Gastrocnemius medialis (tissue), 4 donors: ENCODE measurements at regions of chr9 and their contacts with region 1.

Region 1: GRCh38 chr9:124852829-124853531 is at the start of gene WDR38:
- DNase-seq: peak; percentile 88 to 94
- ATAC-seq: peak; percentile 86 to 88
- H3K4me3 ChIP-seq: peak within 1 kb of the TSS; percentile 35 to 59 (median 50)
- H3K27ac ChIP-seq: peak within 1 kb of the TSS; percentile 80 to 93 (median 90)
- H3K4me1 ChIP-seq: peaks cover 28 to 32% of the 10 kb centered on the region in 2 donors
- H3K27me3 ChIP-seq: no peaks in the 10 kb centered on the region
- CTCF ChIP-seq: peak; percentile 95 to 100 (median 100)
- POLR2A ChIP-seq: no peak
- total RNA-seq, gene WDR38: not detected

Region 2: DNA sequence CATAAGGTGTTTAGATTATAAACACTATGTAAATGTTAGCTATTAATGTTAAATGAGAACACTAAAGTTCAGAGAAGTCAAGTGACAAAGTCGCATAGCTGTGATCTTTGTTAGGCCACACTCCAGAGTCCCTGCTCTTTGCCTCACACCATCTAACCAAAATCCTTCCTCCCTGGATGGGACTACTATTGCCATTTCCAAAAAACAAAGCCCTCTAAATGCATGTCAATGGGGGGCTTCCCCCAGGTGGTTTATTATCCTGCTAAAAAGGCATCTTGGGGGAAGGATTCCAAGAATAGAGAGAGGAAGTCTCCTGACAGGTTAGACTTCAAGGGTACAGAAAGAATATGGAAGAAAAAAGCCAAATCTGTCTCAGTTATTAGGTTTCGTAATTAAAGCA is 92.3 kb before region 1 on chr9:
- in situ Hi-C with region 1: no loop called
- intact Hi-C with region 1: no loop called
- DNase-seq: no peak
- ATAC-seq: no peak
- H3K4me3 ChIP-seq: no peak overlapping the region
- H3K27ac ChIP-seq: no peak overlapping the region
- H3K4me1 ChIP-seq: no peaks in the 10 kb centered on the region
- H3K27me3 ChIP-seq: peaks cover 0 to 8% (median 4%) of the 10 kb centered on the region in 3 donors
- CTCF ChIP-seq: no peak
- POLR2A ChIP-seq: no peak

Region 3: DNA sequence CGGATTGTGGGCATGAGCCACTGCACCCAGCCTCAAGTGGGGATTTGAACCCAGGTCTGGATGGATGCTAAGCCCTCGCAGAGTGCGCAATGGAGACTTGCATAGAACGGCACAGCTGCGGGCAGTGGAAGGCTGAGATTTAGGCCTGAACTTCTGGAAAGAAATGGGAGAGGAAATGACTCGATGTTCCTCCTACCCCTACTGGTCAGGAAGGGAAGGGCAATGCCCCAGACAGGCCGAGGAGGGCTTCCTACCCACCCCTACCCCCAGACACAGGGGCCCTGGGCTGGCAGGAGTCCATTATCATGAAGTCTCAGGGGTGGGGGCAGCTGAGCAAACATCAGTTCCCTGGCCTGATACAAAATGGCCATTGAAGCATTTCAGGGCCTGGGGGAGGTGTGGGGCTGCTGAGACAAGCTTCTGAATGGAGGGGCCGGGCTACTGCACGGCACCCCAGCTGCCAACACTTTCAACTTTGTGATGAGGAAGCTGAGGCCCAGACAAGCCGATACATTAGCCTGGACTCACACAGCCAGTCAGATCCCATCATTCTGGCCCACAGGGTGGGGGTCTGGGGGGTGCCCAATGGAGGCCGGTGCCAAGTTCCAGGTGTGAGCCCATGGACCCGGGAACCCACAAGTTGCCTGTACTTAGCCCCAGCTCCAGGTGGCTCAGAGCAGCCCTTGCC is 13.2 kb before region 1 on chr9:
- in situ Hi-C with region 1: no loop called
- intact Hi-C with region 1: loop called (anchors 1 kb)
- DNase-seq: peak in 1 of 2 donors; percentile 43
- ATAC-seq: peak; percentile 45 to 52
- H3K4me3 ChIP-seq: no peak overlapping the region
- H3K27ac ChIP-seq: peak overlapping the region; percentile 74 to 84 (median 80)
- H3K4me1 ChIP-seq: peaks cover 24 to 26% of the 10 kb centered on the region in 2 donors
- H3K27me3 ChIP-seq: no peaks in the 10 kb centered on the region
- CTCF ChIP-seq: peak; percentile 49 to 80 (median 65)
- POLR2A ChIP-seq: no peak

Region 4: GRCh38 chr9:126116351-126117157 is 1263.6 kb after region 1 on chr9:
- in situ Hi-C with region 1: no loop called
- intact Hi-C with region 1: no loop called
- DNase-seq: no peak
- ATAC-seq: no peak
- H3K4me3 ChIP-seq: no peak overlapping the region
- H3K27ac ChIP-seq: no peak overlapping the region
- H3K4me1 ChIP-seq: no peaks in the 10 kb centered on the region
- H3K27me3 ChIP-seq: peaks cover 0 to 4% (median 0%) of the 10 kb centered on the region in 3 donors
- CTCF ChIP-seq: no peak
- POLR2A ChIP-seq: no peak